ENCODE measurements at regions of chr1 and their contacts with region 1.

Region 1: GRCh38 chr1:61005614-61006580 is 76.5 kb upstream of the NFIA start:
- DNase-seq: no peak
- ATAC-seq: no peak
- H3K4me3 ChIP-seq: no peak overlapping the region
- H3K27ac ChIP-seq: no peak overlapping the region
- H3K4me1 ChIP-seq: no peaks in the 10 kb centered on the region
- H3K27me3 ChIP-seq: no peaks in the 10 kb centered on the region
- CTCF ChIP-seq: no peak
- POLR2A ChIP-seq: no peak

Region 2: DNA sequence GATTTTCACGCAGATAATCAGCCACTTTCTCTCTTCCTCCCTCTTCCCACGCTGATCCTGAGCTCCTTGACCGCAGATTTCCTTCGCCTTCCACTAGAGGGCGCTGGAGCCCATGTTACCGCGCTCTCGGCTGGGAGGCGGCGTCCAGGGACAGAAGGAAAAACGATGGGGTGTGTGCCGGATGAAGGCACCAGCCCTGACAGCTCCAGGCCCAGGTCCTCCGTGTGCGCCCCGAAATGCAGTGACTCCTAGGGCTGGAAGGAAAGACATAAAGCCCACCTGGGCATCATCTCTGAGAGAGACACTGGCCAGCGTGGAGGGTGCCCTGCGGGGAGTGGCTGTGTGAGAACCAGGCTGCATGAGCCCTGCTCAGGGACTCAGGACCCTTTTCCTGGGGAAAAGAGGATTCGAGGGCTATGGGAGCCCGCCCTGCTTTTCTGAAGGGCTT is 1034.4 kb before region 1 on chr1:
- in situ Hi-C with region 1: loop called in 1 of 4 experiments (anchors 25 kb)
- intact Hi-C with region 1: no loop called
- DNase-seq: peak; percentile 6 to 44
- ATAC-seq: peak; percentile 80 to 90
- H3K4me3 ChIP-seq: no peak overlapping the region
- H3K27ac ChIP-seq: no peak overlapping the region
- H3K4me1 ChIP-seq: peaks cover 8 to 11% of the 10 kb centered on the region in 2 donors
- H3K27me3 ChIP-seq: no peaks in the 10 kb centered on the region
- CTCF ChIP-seq: peak; percentile 51 to 90 (median 81)
- POLR2A ChIP-seq: no peak

Region 3: DNA sequence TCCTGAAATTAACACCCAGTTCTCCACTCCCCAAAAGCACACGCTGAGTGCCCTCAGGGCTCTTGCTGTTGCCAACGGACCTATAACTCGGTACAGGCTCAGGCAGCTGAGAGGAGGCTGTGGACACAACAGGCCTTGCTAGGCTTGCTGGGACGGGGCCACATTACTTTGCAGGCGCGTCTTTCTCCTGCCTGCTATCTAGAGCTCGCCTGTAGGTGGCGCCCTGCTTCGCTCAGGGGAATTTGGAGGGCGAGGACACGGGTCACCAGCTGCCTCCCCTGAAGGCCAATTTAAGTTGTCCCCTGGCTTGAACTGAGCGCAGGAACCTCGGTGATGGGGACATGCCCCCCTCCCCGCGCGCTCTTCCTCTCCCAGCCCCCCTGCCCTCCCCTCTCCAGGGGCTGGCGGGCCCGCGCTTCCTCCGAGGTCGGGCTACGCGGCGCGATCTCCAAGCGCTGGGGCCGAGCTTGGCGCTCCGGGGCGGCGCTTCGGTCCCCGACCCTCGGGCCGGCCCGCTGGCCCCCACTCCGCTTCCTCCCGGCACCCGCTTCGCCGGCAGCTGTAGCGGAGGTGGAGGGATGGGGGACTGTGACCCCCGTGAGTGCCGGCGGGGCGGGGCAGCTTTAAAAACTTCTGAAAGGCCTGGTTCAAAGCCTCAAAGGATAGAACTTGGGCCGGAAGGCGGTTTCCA is 44.1 kb after region 1 on chr1:
- in situ Hi-C with region 1: no loop called
- intact Hi-C with region 1: no loop called
- DNase-seq: peak; percentile 87 to 95
- ATAC-seq: peak; percentile 66 to 70
- H3K4me3 ChIP-seq: peak overlapping the region; percentile 75 to 99 (median 96)
- H3K27ac ChIP-seq: peak overlapping the region; percentile 92 to 100 (median 96)
- H3K4me1 ChIP-seq: peaks cover 22 to 28% of the 10 kb centered on the region in 2 donors
- H3K27me3 ChIP-seq: no peaks in the 10 kb centered on the region
- CTCF ChIP-seq: peak; percentile 94 to 99 (median 97)
- POLR2A ChIP-seq: peak in 1 of 2 donors; percentile 54